ENCODE measurements at regions of chr19 and their contacts with region 1.

Region 1: GRCh38 chr19:48780631-48781391 is 25.5 kb downstream of the FGF21 start:
- DNase-seq: no peak
- H3K4me3 ChIP-seq: no peak overlapping the region
- H3K27ac ChIP-seq: no peak overlapping the region
- H3K4me1 ChIP-seq: no peaks in the 10 kb centered on the region
- H3K27me3 ChIP-seq: peaks cover 0 to 3% (median 0%) of the 10 kb centered on the region in 4 experiments; a peak in 3 of 7 replicates
- CTCF ChIP-seq: no peak
- EP300 ChIP-seq: no peak
- POLR2A ChIP-seq: no peak
- RAD21 ChIP-seq: no peak

Region 2: DNA sequence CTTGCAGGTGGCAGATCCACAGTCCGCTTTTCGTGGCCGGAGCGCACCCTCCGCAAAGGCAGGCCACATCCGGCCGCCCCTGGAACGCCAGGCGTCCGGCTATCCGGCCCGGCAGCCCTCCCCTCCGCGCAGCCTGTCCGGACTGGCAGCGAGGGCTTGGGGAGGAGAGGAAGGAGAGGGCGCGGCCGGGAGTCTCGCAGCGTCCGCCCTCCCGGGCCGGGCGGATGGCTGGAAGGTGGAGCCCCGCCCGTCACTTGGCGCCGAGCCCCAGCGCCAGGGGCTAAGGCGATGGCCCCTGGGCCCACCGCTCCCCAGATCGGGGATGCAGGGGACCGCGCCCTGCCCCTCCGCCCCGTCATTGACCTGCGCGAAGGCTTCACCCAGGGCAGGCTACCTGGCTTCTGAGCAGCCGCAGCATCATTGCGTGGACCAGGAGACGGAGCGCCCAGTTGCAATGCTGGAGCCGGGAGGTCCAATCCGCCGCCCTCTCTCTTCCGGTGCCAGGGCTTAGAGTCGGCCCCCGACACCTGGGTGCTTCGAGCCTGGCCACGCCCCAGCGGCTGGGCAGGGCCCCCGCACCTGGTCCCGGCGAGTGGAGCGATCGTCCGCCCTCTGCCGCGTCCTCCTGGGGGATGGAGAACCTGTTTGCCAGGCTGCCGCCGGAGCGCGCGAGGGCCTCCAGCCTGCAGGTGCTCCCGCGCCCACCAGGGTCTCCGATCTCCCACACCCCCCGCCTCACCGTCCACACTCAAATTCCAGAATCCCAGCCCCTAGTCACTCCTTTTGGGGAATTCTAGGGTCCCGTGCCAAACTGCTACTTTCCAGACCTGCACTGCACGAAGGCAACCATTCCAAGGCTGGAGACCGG is 28.1 kb before region 1 on chr19 and contains the start of gene FUT1:
- CTCF ChIA-PET with region 1: interaction called, 4 read pairs
- POLR2A ChIA-PET with region 1: interaction called, 11 read pairs
- DNase-seq: peak; percentile 61 to 94
- H3K4me3 ChIP-seq: peak within 1 kb of the TSS; percentile 92 to 97 (median 96)
- H3K27ac ChIP-seq: peak within 1 kb of the TSS; percentile 64; the same call in 1 of the 2 replicates
- H3K4me1 ChIP-seq: peaks cover 3 to 25% (median 18%) of the 10 kb centered on the region in 4 experiments
- H3K27me3 ChIP-seq: no peaks in the 10 kb centered on the region
- CTCF ChIP-seq: peak in 2 of 3 experiments; percentile 14 to 28; a peak in 2 of 4 replicates
- EP300 ChIP-seq: peak in 1 of 2 experiments; percentile 54; a peak in 1 of 3 replicates
- POLR2A ChIP-seq: peak in 1 of 2 experiments; percentile 73; a peak in 2 of 3 replicates
- RAD21 ChIP-seq: no peak; a peak in 1 of 4 replicates
- total RNA-seq, gene FUT1: 12.2 and 12.9 TPM in 2 replicates

Measured in H1 (cell line).